ENCODE measurements at regions of chr22 and their contacts with region 1.

Region 1: DNA sequence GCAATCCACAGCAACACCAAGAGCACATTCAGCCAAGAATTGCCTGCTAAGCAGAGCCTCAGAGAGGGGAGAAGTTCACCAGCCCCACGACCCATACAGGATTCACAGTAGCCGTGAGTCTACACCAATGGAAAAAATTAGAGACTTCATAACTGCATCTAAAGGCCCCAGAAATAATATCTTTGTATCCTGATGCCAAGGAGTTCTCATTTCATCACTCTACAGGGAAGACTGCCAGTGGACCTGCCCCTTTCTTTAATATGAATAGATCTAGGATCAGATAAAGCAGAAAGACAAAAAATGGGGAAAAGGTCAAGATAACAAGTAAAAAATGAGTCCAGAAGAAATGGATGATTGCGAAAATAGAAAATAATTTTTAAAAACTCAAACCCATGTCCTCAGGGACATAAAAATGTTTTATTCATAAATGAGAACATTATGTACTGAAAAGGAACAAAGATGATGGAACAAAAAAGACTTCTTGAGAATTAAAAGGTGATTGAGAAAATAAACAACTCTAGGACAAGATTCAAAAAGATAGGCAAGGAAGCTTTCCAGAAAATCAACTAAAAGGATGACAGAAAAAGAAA is 9.5 kb downstream of the APOL3 start:
- DNase-seq: no peak
- ATAC-seq: no peak
- H3K4me3 ChIP-seq: no peak overlapping the region
- H3K4me3 Mint-ChIP-seq: peak overlapping the region in 9 of 10 donors; percentile 11 to 98 (median 56)
- H3K27ac ChIP-seq: peak overlapping the region; percentile 25
- H3K27ac Mint-ChIP-seq: peak overlapping the region in 8 of 9 donors; percentile 72 to 99 (median 90)
- H3K4me1 ChIP-seq: peaks cover 56 to 60% of the 10 kb centered on the region in 2 donors
- H3K4me1 Mint-ChIP-seq: peaks cover 45 to 79% (median 75%) of the 10 kb centered on the region in 7 donors
- H3K27me3 ChIP-seq: no peaks in the 10 kb centered on the region
- H3K27me3 Mint-ChIP-seq: no peaks in the 10 kb centered on the region

Region 2: GRCh38 chr22:36134182-36134581 is 16.9 kb before region 1 on chr22:
- CTCF ChIA-PET with region 1: no interaction called
- POLR2A ChIA-PET with region 1: no interaction called
- intact Hi-C with region 1: no loop called
- DNase-seq: no peak
- ATAC-seq: no peak
- H3K4me3 ChIP-seq: no peak overlapping the region
- H3K4me3 Mint-ChIP-seq: no peak overlapping the region
- H3K27ac ChIP-seq: no peak overlapping the region
- H3K27ac Mint-ChIP-seq: peak overlapping the region in 2 of 9 donors; percentile 1 to 18
- H3K4me1 ChIP-seq: peaks cover 0 to 10% of the 10 kb centered on the region in 2 donors
- H3K4me1 Mint-ChIP-seq: peaks cover 10 to 31% (median 22%) of the 10 kb centered on the region in 7 donors
- H3K27me3 ChIP-seq: no peaks in the 10 kb centered on the region
- H3K27me3 Mint-ChIP-seq: peaks cover 0 to 5% (median 0%) of the 10 kb centered on the region in 5 donors

Region 3: GRCh38 chr22:36162127-36163034 is 11.3 kb after region 1 on chr22:
- CTCF ChIA-PET with region 1: interaction called, 4 read pairs
- POLR2A ChIA-PET with region 1: interaction called, 12 read pairs
- intact Hi-C with region 1: no loop called
- DNase-seq: peak in 5 of 9 donors; percentile 22 to 59 (median 36)
- ATAC-seq: peak; percentile 74
- H3K4me3 ChIP-seq: peak overlapping the region; percentile 8
- H3K4me3 Mint-ChIP-seq: peak overlapping the region in 9 of 10 donors; percentile 3 to 99 (median 96)
- H3K27ac ChIP-seq: peak overlapping the region; percentile 96
- H3K27ac Mint-ChIP-seq: peak overlapping the region; percentile 95 to 99 (median 98)
- H3K4me1 ChIP-seq: peaks cover 40 to 52% of the 10 kb centered on the region in 2 donors
- H3K4me1 Mint-ChIP-seq: peaks cover 46 to 97% (median 83%) of the 10 kb centered on the region in 7 donors
- H3K27me3 ChIP-seq: no peaks in the 10 kb centered on the region
- H3K27me3 Mint-ChIP-seq: no peaks in the 10 kb centered on the region

Measured in naive thymus-derived CD4-positive, alpha-beta T cell (primary cell).